BJ (cell line): ENCODE measurements at regions of chr1 and their contacts with region 1.

Region 1: GRCh38 chr1:158095737-158096335 is 84.9 kb upstream of the CD1D start:
- DNase-seq: no peak
- H3K4me3 ChIP-seq: no peak overlapping the region
- H3K27me3 ChIP-seq: no peaks in the 10 kb centered on the region
- CTCF ChIP-seq: peak; percentile 81

Region 2: DNA sequence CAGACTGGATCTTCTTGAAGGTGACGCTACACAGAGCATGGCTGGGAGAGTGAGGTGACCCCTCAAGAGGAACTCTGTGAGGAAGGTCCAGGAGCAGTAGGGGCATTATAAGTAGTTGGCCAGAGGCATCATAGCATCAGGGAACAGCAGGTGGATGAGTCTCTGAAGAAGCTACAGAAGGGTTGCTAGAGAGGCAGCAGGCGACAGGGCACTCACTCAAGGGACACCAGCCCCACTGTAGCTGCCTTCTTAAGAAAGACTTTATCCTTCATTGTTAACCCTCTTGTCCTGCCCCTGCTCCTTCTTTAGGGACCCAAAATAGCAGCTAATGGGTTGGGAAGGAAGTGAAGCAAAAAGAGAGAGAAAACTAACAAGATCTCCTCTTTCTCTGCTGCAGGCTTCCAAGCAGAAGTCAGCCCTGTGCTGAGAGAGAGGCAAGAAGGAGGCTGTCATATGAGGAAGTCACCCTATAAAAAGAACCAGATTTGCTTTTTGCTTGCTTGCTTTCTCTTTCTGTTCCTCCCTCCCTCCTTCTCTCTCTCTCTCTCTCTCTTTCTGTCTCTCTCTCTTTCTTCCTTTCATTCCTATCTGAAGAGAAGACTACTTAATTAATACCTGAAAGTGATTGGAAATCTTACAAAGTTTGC is 246.5 kb before region 1 on chr1:
- CTCF ChIA-PET with region 1: no interaction called
- POLR2A ChIA-PET with region 1: no interaction called
- DNase-seq: no peak
- H3K4me3 ChIP-seq: no peak overlapping the region
- H3K27me3 ChIP-seq: peaks cover 2% of the 10 kb centered on the region; the same call in 1 of the 2 replicates
- CTCF ChIP-seq: no peak

Region 3: DNA sequence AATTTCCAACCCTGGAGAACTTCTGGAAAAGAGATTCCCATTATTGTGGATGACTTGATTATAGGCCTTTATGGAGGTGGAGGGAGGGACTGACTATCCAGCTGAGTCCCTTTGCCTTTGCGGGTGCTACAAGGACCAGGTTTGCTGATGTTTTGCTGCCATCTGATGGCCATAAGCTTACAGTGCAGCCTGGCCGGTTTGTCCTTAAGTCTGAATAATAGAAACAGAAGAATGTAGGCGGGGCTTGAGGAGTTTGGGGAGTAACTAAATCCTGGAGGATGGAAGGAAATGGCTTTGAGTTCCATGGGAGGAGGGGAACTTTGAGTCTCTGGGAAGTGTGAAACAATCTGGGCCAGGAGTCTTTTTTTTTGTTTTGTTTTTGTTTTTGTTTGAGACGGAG is 29.2 kb after region 1 on chr1:
- CTCF ChIA-PET with region 1: interaction called, 187 read pairs
- POLR2A ChIA-PET with region 1: no interaction called
- DNase-seq: peak; percentile 73
- H3K4me3 ChIP-seq: no peak overlapping the region
- H3K27me3 ChIP-seq: peaks cover 7% of the 10 kb centered on the region
- CTCF ChIP-seq: peak; percentile 90

Region 4: GRCh38 chr1:158203693-158204457 is 108.0 kb after region 1 on chr1:
- CTCF ChIA-PET with region 1: no interaction called
- POLR2A ChIA-PET with region 1: no interaction called
- DNase-seq: no peak
- H3K4me3 ChIP-seq: no peak overlapping the region
- H3K27me3 ChIP-seq: no peaks in the 10 kb centered on the region
- CTCF ChIP-seq: peak; percentile 72